ENCODE measurements at regions of chr2 and their contacts with region 1.

Region 1: DNA sequence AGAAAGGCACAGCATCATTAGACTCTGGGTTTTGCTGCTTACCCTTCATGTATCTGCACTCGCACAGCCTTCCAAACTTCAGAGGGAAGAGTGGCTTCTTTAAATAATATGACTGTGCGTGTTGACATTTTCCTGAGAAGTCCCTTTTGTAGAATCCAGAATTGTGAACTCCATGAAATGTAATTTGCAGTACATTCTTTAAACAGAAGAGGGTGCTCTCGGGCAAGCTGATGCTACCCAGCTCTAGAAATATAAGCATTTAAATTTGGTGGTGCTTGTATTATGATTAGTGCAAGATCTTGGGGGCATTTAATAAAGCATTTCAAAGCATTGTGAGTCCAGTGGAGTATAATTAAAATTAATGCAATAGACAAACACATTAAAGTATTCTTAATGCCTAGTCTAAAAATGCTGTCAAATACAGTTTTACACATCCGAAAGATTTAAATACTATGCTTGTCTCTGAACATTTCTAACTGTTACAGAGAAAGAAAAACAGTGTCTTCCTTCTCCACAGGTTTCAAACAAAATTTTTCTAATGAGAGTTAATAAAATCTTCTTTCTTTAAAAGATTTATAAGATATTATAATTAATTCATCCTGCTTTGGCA is 17.3 kb upstream of the GTF2A1L start:
- DNase-seq: peak; percentile 41
- H3K4me3 Mint-ChIP-seq: no peak overlapping the region
- H3K27ac Mint-ChIP-seq: no peak overlapping the region
- H3K4me1 Mint-ChIP-seq: no peaks in the 10 kb centered on the region
- H3K27me3 Mint-ChIP-seq: no peaks in the 10 kb centered on the region
- CTCF ChIP-seq: peak; percentile 44

Region 2: DNA sequence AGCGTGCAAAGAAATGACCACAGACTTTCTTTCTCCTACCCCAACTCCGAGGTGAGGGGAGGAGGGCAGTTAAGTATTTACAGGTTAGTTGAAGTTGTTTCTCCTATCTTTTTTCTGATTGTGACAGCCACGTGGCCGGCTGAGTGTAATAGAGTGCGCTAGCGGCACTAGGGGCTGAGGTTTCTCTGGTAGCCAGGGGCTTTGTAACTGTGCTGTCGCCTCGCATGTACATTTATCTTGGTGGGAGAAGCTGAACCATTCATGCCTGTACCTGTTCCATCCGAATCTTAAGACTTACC is 284.5 kb before region 1 on chr2:
- CTCF ChIA-PET with region 1: no interaction called
- intact Hi-C with region 1: no loop called
- DNase-seq: peak; percentile 28
- H3K4me3 Mint-ChIP-seq: peak overlapping the region; percentile 94
- H3K27ac Mint-ChIP-seq: peak overlapping the region; percentile 87
- H3K4me1 Mint-ChIP-seq: peaks cover 16% of the 10 kb centered on the region
- H3K27me3 Mint-ChIP-seq: no peaks in the 10 kb centered on the region
- CTCF ChIP-seq: no peak

Region 3: GRCh38 chr2:48725696-48726494 is 125.6 kb after region 1 on chr2:
- CTCF ChIA-PET with region 1: no interaction called
- intact Hi-C with region 1: loop called (anchors 1 kb)
- DNase-seq: no peak
- H3K4me3 Mint-ChIP-seq: no peak overlapping the region
- H3K27ac Mint-ChIP-seq: no peak overlapping the region
- H3K4me1 Mint-ChIP-seq: peaks cover 8% of the 10 kb centered on the region
- H3K27me3 Mint-ChIP-seq: peaks cover 17% of the 10 kb centered on the region
- CTCF ChIP-seq: no peak

Region 4: GRCh38 chr2:48768669-48769068 is 168.4 kb after region 1 on chr2:
- CTCF ChIA-PET with region 1: no interaction called
- intact Hi-C with region 1: loop called (anchors 5 kb)
- DNase-seq: no peak
- H3K4me3 Mint-ChIP-seq: no peak overlapping the region
- H3K27ac Mint-ChIP-seq: no peak overlapping the region
- H3K4me1 Mint-ChIP-seq: no peaks in the 10 kb centered on the region
- H3K27me3 Mint-ChIP-seq: peaks cover 53% of the 10 kb centered on the region
- CTCF ChIP-seq: no peak

Region 5: DNA sequence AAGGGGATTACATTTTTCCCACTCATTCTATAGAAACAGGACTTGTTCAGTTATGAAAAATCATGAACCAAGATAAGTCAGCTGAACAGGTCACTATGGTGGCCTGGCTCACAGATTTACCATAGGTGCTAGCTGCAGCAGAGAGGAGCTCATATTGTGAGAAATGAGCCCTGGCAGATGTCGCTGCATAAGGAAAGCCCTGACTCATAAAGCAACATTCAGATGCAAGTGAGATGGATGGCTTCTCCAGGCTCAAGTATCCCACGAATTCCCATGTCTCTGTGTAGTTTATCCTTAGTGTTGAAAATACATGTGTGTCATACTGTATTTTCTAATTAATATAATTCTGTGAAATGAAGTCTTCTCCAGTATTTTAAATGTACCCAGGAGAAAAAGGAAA is 270.2 kb after region 1 on chr2:
- CTCF ChIA-PET with region 1: no interaction called
- intact Hi-C with region 1: loop called (anchors 10 kb)
- DNase-seq: no peak
- H3K4me3 Mint-ChIP-seq: no peak overlapping the region
- H3K27ac Mint-ChIP-seq: no peak overlapping the region
- H3K4me1 Mint-ChIP-seq: no peaks in the 10 kb centered on the region
- H3K27me3 Mint-ChIP-seq: no peaks in the 10 kb centered on the region
- CTCF ChIP-seq: no peak

Region 6: GRCh38 chr2:48946449-48947048 is 346.2 kb after region 1 on chr2:
- CTCF ChIA-PET with region 1: no interaction called
- intact Hi-C with region 1: loop called (anchors 2 kb)
- DNase-seq: peak; percentile 47
- H3K4me3 Mint-ChIP-seq: no peak overlapping the region
- H3K27ac Mint-ChIP-seq: no peak overlapping the region
- H3K4me1 Mint-ChIP-seq: no peaks in the 10 kb centered on the region
- H3K27me3 Mint-ChIP-seq: peaks cover 15% of the 10 kb centered on the region
- CTCF ChIP-seq: peak; percentile 80

Region 7: GRCh38 chr2:50492477-50492851 is 1892.2 kb after region 1 on chr2:
- CTCF ChIA-PET with region 1: no interaction called
- intact Hi-C with region 1: loop called (anchors 5 kb)
- DNase-seq: peak; percentile 35
- H3K4me3 Mint-ChIP-seq: no peak overlapping the region
- H3K27ac Mint-ChIP-seq: no peak overlapping the region
- H3K4me1 Mint-ChIP-seq: no peaks in the 10 kb centered on the region
- H3K27me3 Mint-ChIP-seq: peaks cover 50% of the 10 kb centered on the region
- CTCF ChIP-seq: peak; percentile 31

Measured in Calu3 (cell line).